H1 (cell line): ENCODE measurements at regions of chr3 and their contacts with region 1.

Region 1: DNA sequence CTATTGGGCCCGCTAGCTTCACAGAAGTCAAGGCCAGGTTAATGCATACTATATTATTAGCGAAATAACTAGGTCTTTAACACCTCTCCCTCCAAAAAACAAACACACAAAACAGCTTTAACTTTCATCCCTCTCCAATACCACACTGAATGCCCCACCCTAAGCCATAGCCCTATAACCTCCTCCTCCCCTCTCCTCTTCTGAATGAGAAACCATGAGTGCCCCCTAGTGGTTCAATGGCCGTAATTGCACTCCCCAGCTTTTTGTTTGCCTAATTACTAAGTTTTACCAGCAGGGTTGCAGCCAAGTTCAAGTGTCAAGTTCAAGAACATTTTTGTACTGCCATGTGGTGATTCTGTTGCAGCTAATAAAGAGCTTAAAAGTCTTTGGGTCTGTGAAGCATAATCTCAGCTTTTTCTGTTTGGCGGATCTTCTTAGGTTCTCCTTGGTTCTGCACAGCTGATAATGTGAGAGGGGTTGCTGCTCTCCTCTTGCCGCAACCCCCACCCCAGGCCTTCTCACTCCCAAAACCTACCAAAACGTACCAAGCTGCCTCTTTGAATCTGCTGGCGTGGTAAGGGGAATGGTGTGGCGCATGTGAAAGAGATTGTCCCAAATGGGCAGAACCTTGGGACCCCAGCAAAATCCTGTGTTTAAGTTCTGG is 57.9 kb downstream of the RPL22L1 start:
- DNase-seq: peak; percentile 59 to 78
- H3K4me3 ChIP-seq: no peak overlapping the region
- H3K27ac ChIP-seq: no peak overlapping the region
- H3K4me1 ChIP-seq: peaks cover 4 to 19% (median 9%) of the 10 kb centered on the region in 4 experiments; a peak in 5 of 7 replicates
- H3K27me3 ChIP-seq: no peaks in the 10 kb centered on the region
- CTCF ChIP-seq: peak in 2 of 3 experiments; percentile 92 to 96; a peak in 3 of 4 replicates
- EP300 ChIP-seq: no peak
- POLR2A ChIP-seq: no peak
- RAD21 ChIP-seq: peak; percentile 88 to 94

Region 2: DNA sequence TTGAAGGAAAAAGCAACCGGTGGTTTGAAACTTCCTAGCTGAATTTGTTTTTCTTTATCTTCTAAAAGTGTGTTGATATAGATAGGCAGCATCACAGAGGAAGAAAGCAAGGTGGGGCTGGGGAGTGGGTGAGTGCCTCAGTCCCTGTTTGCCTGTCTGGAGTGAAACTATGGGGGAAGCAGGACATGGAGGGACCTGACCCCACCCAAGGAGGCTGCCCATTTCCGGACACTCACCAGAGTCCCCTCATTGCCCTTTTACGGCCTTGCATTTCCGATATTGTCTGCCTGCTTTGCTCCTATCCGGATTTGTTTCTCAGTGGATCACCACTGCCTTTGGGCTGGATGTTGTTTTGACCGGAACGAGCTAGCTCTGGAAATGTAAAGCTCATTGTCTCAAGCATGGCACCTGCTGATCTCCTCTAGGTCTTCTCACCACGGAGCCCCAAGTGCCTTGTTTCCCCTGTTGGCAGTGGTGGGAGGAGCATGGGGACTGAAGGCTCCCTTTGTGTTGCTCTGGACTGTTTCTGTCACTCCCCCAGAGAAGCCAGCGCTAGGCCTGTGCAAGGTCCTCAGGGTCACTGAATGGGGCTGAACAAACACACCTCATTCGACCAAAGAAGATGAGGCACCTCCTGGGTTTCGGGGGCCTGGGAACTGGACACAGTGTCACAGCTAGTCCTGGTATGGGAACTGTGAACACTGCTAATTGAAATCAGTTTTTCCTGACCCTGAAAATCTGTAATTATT is 386.4 kb before region 1 on chr3:
- CTCF ChIA-PET with region 1: interaction called, 14 read pairs
- POLR2A ChIA-PET with region 1: no interaction called
- DNase-seq: no peak
- H3K4me3 ChIP-seq: no peak overlapping the region
- H3K27ac ChIP-seq: no peak overlapping the region
- H3K4me1 ChIP-seq: peaks cover 0 to 9% (median 0%) of the 10 kb centered on the region in 4 experiments; a peak in 2 of 7 replicates
- H3K27me3 ChIP-seq: peaks cover 0 to 6% (median under 1%) of the 10 kb centered on the region in 4 experiments; a peak in 6 of 7 replicates
- CTCF ChIP-seq: no peak
- EP300 ChIP-seq: no peak
- POLR2A ChIP-seq: no peak
- RAD21 ChIP-seq: no peak

Region 3: DNA sequence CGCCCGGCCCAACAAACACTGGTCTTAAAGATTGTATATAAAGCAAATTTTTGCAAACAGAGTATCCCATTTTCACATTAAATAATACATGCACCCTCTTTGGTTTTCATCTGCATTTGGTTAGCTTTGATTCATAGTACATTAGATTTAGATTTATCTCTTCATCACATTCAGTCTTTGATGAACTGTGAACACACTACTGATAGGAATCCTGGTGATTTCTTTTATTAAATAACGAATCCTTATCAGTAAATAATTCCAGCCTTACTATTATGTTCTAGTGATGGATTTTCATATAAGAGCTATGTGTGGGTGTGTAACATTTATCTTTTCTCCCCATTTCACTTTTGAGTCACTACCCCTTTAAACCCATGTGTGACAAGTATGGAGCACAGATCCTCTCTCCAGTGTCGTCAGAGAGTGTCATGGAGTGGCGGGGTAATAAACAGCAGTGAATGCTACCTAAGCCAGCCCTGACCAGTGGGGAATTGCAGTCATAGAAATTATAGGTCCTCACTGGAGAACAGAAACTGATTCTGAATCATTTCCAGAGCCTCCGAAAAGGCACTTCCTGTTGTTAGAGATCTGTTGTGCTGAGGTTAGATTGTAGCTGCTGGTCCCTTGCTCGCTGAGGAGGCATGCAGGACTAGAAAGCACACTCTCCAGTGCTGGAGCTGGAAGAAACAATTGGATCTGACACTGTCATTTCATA is 248.2 kb before region 1 on chr3:
- CTCF ChIA-PET with region 1: interaction called, 23 read pairs
- POLR2A ChIA-PET with region 1: no interaction called
- DNase-seq: no peak
- H3K4me3 ChIP-seq: no peak overlapping the region
- H3K27ac ChIP-seq: no peak overlapping the region
- H3K4me1 ChIP-seq: no peaks in the 10 kb centered on the region
- H3K27me3 ChIP-seq: no peaks in the 10 kb centered on the region
- CTCF ChIP-seq: no peak
- EP300 ChIP-seq: no peak
- POLR2A ChIP-seq: no peak
- RAD21 ChIP-seq: no peak

Region 4: GRCh38 chr3:170730071-170730753 is 81.8 kb before region 1 on chr3:
- CTCF ChIA-PET with region 1: interaction called, 12 read pairs
- POLR2A ChIA-PET with region 1: no interaction called
- DNase-seq: no peak
- H3K4me3 ChIP-seq: no peak overlapping the region
- H3K27ac ChIP-seq: no peak overlapping the region
- H3K4me1 ChIP-seq: peaks cover 0 to 5% (median 2%) of the 10 kb centered on the region in 4 experiments; a peak in 3 of 7 replicates
- H3K27me3 ChIP-seq: no peaks in the 10 kb centered on the region
- CTCF ChIP-seq: no peak
- EP300 ChIP-seq: no peak
- POLR2A ChIP-seq: no peak
- RAD21 ChIP-seq: no peak

Region 5: GRCh38 chr3:170835336-170835735 is 23.3 kb after region 1 on chr3:
- CTCF ChIA-PET with region 1: interaction called, 34 read pairs
- POLR2A ChIA-PET with region 1: interaction called, 3 read pairs
- DNase-seq: no peak
- H3K4me3 ChIP-seq: no peak overlapping the region
- H3K27ac ChIP-seq: no peak overlapping the region
- H3K4me1 ChIP-seq: peaks cover 2 to 12% (median 5%) of the 10 kb centered on the region in 4 experiments; a peak in 3 of 7 replicates
- H3K27me3 ChIP-seq: no peaks in the 10 kb centered on the region
- CTCF ChIP-seq: no peak
- EP300 ChIP-seq: no peak
- POLR2A ChIP-seq: no peak
- RAD21 ChIP-seq: no peak

Region 6: GRCh38 chr3:171049861-171050444 is 237.9 kb after region 1 on chr3:
- CTCF ChIA-PET with region 1: no interaction called
- POLR2A ChIA-PET with region 1: no interaction called
- DNase-seq: peak; percentile 36 to 65
- H3K4me3 ChIP-seq: no peak overlapping the region
- H3K27ac ChIP-seq: no peak overlapping the region
- H3K4me1 ChIP-seq: no peaks in the 10 kb centered on the region
- H3K27me3 ChIP-seq: no peaks in the 10 kb centered on the region
- CTCF ChIP-seq: peak; percentile 67 to 84 (median 68)
- EP300 ChIP-seq: no peak
- POLR2A ChIP-seq: no peak
- RAD21 ChIP-seq: peak; percentile 91 to 92